Breast epithelium (tissue), 4 donors: ENCODE measurements at regions of chr3 and their contacts with region 1.

Region 1: DNA sequence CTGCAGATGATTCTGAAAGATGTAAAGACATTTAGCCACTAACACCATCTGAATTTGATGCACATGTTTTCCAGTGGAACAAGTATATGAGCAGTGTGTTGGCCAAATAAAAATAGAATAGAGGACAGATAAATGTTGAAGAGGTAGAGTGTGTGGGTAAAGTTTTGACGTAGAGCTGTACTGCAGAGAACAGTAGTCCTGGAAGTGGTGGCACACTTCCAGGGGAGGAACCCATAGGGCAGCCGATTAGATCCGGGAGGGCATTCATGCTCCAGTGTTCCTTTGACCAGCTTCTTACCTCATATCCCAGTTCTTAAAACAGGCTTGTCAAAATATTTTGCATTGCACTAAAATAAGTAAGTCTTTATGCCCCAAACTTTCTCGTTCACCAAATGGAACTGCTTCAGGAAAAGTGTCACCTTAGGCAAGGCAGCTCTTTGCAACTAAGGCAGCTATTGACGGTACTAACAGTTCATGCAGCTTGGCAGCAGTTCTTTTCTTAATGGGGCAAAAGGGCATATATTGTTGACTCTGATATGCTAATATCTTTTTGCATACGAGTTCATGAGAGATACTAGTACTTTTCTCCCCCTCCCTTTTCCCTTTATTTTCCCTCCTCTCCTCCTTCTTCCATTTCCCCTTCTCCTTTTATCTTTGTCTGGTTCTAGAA is 429.3 kb upstream of the AZI2 start:
- DNase-seq: no peak
- H3K4me3 ChIP-seq: no peak overlapping the region
- H3K27ac ChIP-seq: no peak overlapping the region
- H3K4me1 ChIP-seq: no peaks in the 10 kb centered on the region
- H3K27me3 ChIP-seq: no peaks in the 10 kb centered on the region
- CTCF ChIP-seq: no peak
- POLR2A ChIP-seq: no peak

Region 2: GRCh38 chr3:28690176-28690575 is 87.8 kb before region 1 on chr3:
- intact Hi-C with region 1: no loop called
- DNase-seq: no peak
- H3K4me3 ChIP-seq: no peak overlapping the region
- H3K27ac ChIP-seq: no peak overlapping the region
- H3K4me1 ChIP-seq: no peaks in the 10 kb centered on the region
- H3K27me3 ChIP-seq: no peaks in the 10 kb centered on the region
- CTCF ChIP-seq: no peak
- POLR2A ChIP-seq: no peak

Region 3: DNA sequence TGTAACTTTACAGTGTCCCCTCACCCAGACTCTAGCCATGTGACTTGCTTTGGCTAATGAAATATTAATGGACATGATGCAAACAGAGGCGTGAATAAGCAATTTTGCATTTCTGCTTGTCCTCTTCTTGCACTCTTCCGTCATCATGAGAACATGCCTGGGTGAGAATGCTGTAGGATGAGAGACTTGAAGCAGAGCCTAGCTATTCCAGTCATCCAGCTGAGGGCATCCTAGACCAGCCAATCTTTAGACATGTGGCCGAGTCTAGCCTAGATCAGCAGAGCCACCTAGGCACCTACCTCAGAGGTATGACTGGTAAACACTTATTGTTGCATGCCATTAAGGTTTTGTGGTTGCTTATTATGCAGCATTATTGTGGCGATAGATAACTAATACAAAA is 21.1 kb after region 1 on chr3:
- intact Hi-C with region 1: no loop called
- DNase-seq: no peak
- H3K4me3 ChIP-seq: no peak overlapping the region
- H3K27ac ChIP-seq: no peak overlapping the region
- H3K4me1 ChIP-seq: no peaks in the 10 kb centered on the region
- H3K27me3 ChIP-seq: no peaks in the 10 kb centered on the region
- CTCF ChIP-seq: no peak
- POLR2A ChIP-seq: no peak

Region 4: GRCh38 chr3:29627136-29628117 is 849.5 kb after region 1 on chr3:
- intact Hi-C with region 1: loop called (anchors 5 kb)
- DNase-seq: no peak
- H3K4me3 ChIP-seq: no peak overlapping the region
- H3K27ac ChIP-seq: no peak overlapping the region
- H3K4me1 ChIP-seq: no peaks in the 10 kb centered on the region
- H3K27me3 ChIP-seq: no peaks in the 10 kb centered on the region
- CTCF ChIP-seq: no peak
- POLR2A ChIP-seq: no peak

Region 5: GRCh38 chr3:30156586-30157498 is 1378.9 kb after region 1 on chr3:
- intact Hi-C with region 1: loop called (anchors 5 kb)
- DNase-seq: no peak
- H3K4me3 ChIP-seq: no peak overlapping the region
- H3K27ac ChIP-seq: no peak overlapping the region
- H3K4me1 ChIP-seq: no peaks in the 10 kb centered on the region
- H3K27me3 ChIP-seq: no peaks in the 10 kb centered on the region
- CTCF ChIP-seq: no peak
- POLR2A ChIP-seq: no peak